H1 (cell line): ENCODE measurements at regions of chr11 and their contacts with region 1.

Region 1: DNA sequence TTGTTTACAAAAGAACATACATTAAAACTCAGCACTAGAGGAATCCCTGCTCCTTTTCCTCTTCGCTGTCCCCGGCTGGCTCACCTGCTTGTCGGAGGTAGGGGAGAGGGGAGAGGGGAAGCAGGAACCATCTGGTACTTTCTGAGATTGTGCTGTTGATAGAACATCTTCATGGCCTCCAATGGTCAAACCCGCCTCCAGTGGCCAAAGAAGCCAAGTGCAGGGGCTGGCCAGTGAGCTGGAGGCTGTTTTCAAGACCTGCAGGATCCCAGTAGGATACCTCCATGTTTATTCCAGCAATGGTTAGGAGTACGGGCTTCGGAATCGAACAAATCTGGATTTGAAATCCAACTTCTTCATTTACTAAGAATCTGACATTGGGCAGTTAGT is 92.6 kb downstream of the PKNOX2 start:
- DNase-seq: peak in 1 of 2 experiments; percentile 59
- H3K4me3 ChIP-seq: no peak overlapping the region
- H3K27ac ChIP-seq: no peak overlapping the region
- H3K4me1 ChIP-seq: peaks cover 3 to 18% (median 7%) of the 10 kb centered on the region in 4 experiments; a peak in 6 of 7 replicates
- H3K27me3 ChIP-seq: peaks cover 0 to 11% (median 8%) of the 10 kb centered on the region in 4 experiments; a peak in 3 of 7 replicates
- CTCF ChIP-seq: peak; percentile 57 to 79 (median 68)
- EP300 ChIP-seq: no peak
- POLR2A ChIP-seq: no peak
- RAD21 ChIP-seq: peak; percentile 64 to 78

Region 2: GRCh38 chr11:125170510-125171031 is 86.6 kb before region 1 on chr11:
- CTCF ChIA-PET with region 1: interaction called, 11 read pairs
- POLR2A ChIA-PET with region 1: interaction called, 15 read pairs
- DNase-seq: no peak
- H3K4me3 ChIP-seq: peak overlapping the region in 1 of 4 experiments; percentile 7; a peak in 1 of 8 replicates
- H3K27ac ChIP-seq: no peak overlapping the region
- H3K4me1 ChIP-seq: peaks cover 19 to 50% (median 32%) of the 10 kb centered on the region in 4 experiments
- H3K27me3 ChIP-seq: peaks cover 14 to 43% (median 38%) of the 10 kb centered on the region in 4 experiments
- CTCF ChIP-seq: no peak
- EP300 ChIP-seq: no peak
- POLR2A ChIP-seq: no peak
- RAD21 ChIP-seq: no peak

Region 3: GRCh38 chr11:125235071-125235471 is 22.1 kb before region 1 on chr11:
- CTCF ChIA-PET with region 1: interaction called, 23 read pairs
- POLR2A ChIA-PET with region 1: interaction called, 3 read pairs
- DNase-seq: no peak
- H3K4me3 ChIP-seq: no peak overlapping the region
- H3K27ac ChIP-seq: no peak overlapping the region
- H3K4me1 ChIP-seq: peaks cover 0 to 10% (median 3%) of the 10 kb centered on the region in 4 experiments; a peak in 5 of 7 replicates
- H3K27me3 ChIP-seq: peaks cover 0 to 4% (median 0%) of the 10 kb centered on the region in 4 experiments; a peak in 1 of 7 replicates
- CTCF ChIP-seq: no peak
- EP300 ChIP-seq: no peak
- POLR2A ChIP-seq: no peak
- RAD21 ChIP-seq: no peak

Region 4: DNA sequence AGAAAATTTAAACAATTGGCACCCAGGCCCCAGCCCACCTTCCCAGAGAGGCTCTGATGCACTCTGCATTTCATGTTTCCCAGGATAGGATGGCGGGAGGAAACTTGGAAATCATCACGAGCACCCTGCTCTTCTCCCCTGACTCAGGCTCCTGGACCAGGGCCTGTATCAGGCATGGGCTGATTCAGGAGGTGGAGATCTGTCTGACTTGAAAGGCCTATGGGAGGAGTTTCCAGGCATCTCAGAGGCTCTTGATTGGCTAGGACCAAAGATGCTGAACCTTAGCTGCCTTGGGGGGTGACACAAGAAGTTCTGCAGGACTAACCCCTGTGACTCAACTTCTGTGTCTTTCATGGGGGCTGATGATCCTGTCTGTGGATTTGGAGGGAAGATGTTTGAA is 13.5 kb after region 1 on chr11:
- CTCF ChIA-PET with region 1: interaction called, 29 read pairs
- POLR2A ChIA-PET with region 1: no interaction called
- DNase-seq: no peak
- H3K4me3 ChIP-seq: no peak overlapping the region
- H3K27ac ChIP-seq: no peak overlapping the region
- H3K4me1 ChIP-seq: peaks cover 1 to 8% (median 7%) of the 10 kb centered on the region in 4 experiments; a peak in 6 of 7 replicates
- H3K27me3 ChIP-seq: no peaks in the 10 kb centered on the region
- CTCF ChIP-seq: no peak
- EP300 ChIP-seq: no peak
- POLR2A ChIP-seq: no peak
- RAD21 ChIP-seq: no peak

Region 5: GRCh38 chr11:125304136-125304535 is 47.0 kb after region 1 on chr11:
- CTCF ChIA-PET with region 1: interaction called, 17 read pairs
- POLR2A ChIA-PET with region 1: no interaction called
- DNase-seq: no peak
- H3K4me3 ChIP-seq: no peak overlapping the region
- H3K27ac ChIP-seq: no peak overlapping the region
- H3K4me1 ChIP-seq: no peaks in the 10 kb centered on the region; a peak in 1 of 7 replicates
- H3K27me3 ChIP-seq: 0 out of 7 replicates have a peak, but pooled peaks cover 0 to 2% (median 0%) of the 10 kb centered on the region in 4 experiments
- CTCF ChIP-seq: no peak
- EP300 ChIP-seq: no peak
- POLR2A ChIP-seq: no peak
- RAD21 ChIP-seq: no peak